Posterior cingulate gyrus (tissue), 11 donors: ENCODE measurements at regions of chr2 and their contacts with region 1.

Region 1: DNA sequence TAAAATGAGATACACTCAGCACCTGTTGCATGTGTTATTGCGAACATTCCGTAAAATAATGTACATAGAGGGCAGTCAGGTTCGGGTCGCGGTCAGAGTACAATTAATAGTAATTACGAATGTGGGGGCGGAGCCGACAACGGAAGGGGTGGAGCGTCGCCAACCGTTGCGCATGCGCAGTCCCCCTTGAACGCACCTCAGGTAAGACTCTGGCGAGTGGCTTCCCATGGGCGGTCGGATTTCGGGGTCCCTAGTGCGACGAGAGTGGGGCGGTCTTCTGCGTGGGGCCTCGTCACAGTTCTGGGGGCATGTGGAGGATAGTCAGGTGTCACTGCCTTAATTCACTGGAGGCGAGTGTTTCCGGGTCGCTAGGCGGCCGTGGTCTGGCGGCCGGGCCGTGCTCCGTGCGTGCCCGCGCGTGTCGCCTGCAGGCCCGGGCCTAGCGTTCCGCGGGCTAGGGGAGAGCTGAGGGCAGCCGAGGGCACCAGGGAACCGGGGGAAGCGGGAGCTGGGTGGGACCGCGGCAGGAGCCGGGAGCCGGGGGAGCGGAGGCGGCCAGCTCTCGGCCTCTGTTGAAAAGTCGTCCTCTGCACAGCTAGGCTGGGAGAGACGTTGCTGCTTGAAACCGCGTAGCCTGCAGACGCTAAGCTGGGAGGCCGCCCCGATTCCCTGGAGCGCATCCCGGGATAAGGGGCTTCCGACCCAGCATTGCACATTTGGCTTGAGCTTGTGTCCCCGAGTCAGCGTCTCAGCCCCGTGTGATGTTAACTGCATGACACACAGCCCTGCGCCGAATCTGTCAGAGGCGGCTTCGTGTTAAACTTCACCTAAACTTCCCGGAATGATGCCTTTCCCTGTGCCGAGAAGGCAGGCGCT is at the start of gene CEBPZOS:
- DNase-seq: peak; percentile 65 to 96 (median 78)

Region 2: DNA sequence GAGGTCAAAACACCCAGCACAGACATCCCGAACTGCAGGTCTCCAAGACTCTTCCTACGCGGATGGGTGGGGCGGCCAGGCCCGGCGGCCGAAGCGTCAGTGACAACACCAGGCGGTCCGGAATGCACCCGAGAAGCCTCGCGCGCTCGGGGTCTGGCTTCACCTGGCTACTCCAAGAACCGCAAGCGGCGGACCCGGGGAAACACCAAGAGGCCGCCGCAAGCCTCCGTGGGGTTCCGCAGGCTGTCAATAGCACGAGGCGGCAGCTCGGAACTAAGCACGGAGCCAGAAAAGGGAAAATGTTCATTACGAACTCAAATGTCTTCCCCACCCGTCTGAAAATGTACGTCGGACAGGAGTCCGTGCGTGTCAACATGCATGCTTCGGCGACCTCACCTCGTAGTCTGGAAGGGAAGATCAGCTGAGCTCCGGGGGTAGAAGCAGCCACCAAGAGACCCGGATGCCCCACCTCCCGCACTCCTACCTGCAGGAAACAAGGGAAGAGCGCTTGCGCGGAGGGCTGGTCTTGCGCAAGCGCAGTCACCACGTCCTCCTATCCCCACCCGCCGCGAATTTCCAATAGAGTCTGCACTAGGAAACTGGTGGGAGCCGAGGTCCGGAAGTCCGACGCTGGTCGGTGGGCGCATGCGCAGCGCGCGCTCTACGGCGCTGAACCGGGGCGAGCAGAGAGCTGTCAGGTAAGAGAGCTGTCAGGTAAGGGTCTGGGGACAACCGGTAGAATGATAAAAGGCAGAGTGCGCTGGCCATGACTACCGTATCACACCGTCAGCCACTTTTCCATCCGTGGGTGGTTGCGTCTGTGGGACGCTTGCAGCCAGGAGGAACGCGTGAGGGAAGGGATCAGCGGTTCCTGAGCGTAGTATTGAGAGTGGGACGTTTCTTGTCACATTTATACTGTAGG is 112.4 kb before region 1 on chr2 and contains the starts of genes GPATCH11 and HEATR5B:
- intact Hi-C with region 1: loop called (anchors 10 kb)
- DNase-seq: peak; percentile 90 to 99 (median 92)

Region 3: GRCh38 chr2:37180006-37180639 is 16.4 kb before region 1 on chr2:
- intact Hi-C with region 1: no loop called
- DNase-seq: no peak

Region 4: DNA sequence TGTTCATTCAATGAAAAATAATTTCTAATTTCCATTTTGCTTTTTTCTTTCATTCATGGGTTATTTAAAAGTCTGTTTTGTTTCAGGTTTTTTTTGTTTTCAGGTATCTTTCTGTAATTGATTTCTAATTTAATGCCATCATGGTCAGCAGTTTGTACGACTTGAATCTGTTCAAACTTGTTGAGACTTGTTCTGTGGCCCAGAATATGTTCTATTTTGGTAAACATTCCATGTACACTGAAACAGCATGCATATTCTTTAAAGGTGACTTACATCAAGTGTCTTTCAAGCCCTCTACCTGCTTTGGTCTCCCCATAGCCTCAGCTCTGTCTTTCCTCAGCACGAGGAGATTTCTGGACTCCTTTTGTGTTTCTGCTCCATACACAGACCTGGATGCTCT is 830.3 kb after region 1 on chr2:
- intact Hi-C with region 1: no loop called
- DNase-seq: no peak